ENCODE measurements at regions of chr1 and their contacts with region 1.

Region 1: GRCh38 chr1:64569411-64569810 is 99.5 kb downstream of the CACHD1 start:
- DNase-seq: no peak
- H3K4me3 ChIP-seq: no peak overlapping the region
- H3K4me3 Mint-ChIP-seq: no peak overlapping the region
- H3K27ac Mint-ChIP-seq: no peak overlapping the region
- H3K4me1 ChIP-seq: peaks cover 16% of the 10 kb centered on the region
- H3K4me1 Mint-ChIP-seq: peaks cover 26% of the 10 kb centered on the region
- H3K27me3 ChIP-seq: no peaks in the 10 kb centered on the region
- H3K27me3 Mint-ChIP-seq: no peaks in the 10 kb centered on the region
- CTCF ChIP-seq: no peak

Region 2: GRCh38 chr1:63917571-63918417 is 651.6 kb before region 1 on chr1:
- CTCF ChIA-PET with region 1: no interaction called
- POLR2A ChIA-PET with region 1: no interaction called
- intact Hi-C with region 1: no loop called
- DNase-seq: no peak
- H3K4me3 ChIP-seq: no peak overlapping the region
- H3K4me3 Mint-ChIP-seq: no peak overlapping the region
- H3K27ac Mint-ChIP-seq: no peak overlapping the region
- H3K4me1 ChIP-seq: peaks cover 83% of the 10 kb centered on the region
- H3K4me1 Mint-ChIP-seq: peaks cover 60% of the 10 kb centered on the region
- H3K27me3 ChIP-seq: no peaks in the 10 kb centered on the region
- H3K27me3 Mint-ChIP-seq: no peaks in the 10 kb centered on the region
- CTCF ChIP-seq: no peak

Region 3: DNA sequence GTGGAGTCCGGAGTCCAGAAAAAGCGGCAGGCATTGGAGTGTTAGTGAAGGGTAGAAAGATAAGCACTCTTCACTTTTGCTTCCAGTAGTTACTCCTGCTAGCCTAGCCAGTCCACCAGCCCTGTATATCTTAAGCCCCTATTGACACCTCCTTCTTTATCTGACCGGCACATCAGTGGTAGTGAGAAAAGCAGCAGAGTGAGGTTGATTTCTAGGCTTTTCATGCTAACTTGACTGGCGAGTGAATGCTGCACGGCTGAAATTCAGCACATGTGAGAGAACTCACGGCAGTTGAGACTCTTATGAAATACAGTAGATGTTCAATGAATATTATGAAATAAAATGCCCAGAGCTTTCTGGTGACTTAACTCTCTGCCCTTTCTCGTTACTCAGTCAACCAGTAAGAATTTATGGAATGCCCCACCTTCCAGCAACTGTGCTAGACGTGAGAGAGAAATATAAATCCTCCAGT is 28.7 kb after region 1 on chr1:
- CTCF ChIA-PET with region 1: no interaction called
- POLR2A ChIA-PET with region 1: no interaction called
- intact Hi-C with region 1: loop called (anchors 1 kb)
- DNase-seq: peak; percentile 30 to 62
- H3K4me3 ChIP-seq: peak overlapping the region; percentile 5; the same call in 1 of the 2 replicates
- H3K4me3 Mint-ChIP-seq: peak overlapping the region; percentile 50
- H3K27ac Mint-ChIP-seq: peak overlapping the region; percentile 91
- H3K4me1 ChIP-seq: peaks cover 46% of the 10 kb centered on the region
- H3K4me1 Mint-ChIP-seq: peaks cover 46% of the 10 kb centered on the region
- H3K27me3 ChIP-seq: no peaks in the 10 kb centered on the region
- H3K27me3 Mint-ChIP-seq: no peaks in the 10 kb centered on the region
- CTCF ChIP-seq: no peak

Region 4: GRCh38 chr1:64703600-64703999 is 134.2 kb after region 1 on chr1:
- CTCF ChIA-PET with region 1: no interaction called
- POLR2A ChIA-PET with region 1: no interaction called
- intact Hi-C with region 1: no loop called
- DNase-seq: no peak
- H3K4me3 ChIP-seq: no peak overlapping the region
- H3K4me3 Mint-ChIP-seq: no peak overlapping the region
- H3K27ac Mint-ChIP-seq: no peak overlapping the region
- H3K4me1 ChIP-seq: no peaks in the 10 kb centered on the region
- H3K4me1 Mint-ChIP-seq: peaks cover 6% of the 10 kb centered on the region
- H3K27me3 ChIP-seq: no peaks in the 10 kb centered on the region
- H3K27me3 Mint-ChIP-seq: no peaks in the 10 kb centered on the region
- CTCF ChIP-seq: no peak